Activated T-helper 1 cell treated with anti-CD3 and anti-CD28 coated beads, Interleukin-12 subunit alpha, Interleukin-12 subunit beta, Interleukin-2, Interleukin-4 antibody, amounts not matched to agents 30 ng/mL and 10 ng/mL and 1 ng/mL, durations not matched to agents 14 hours and 24 hours and 36 hours (primary cell): ENCODE measurements at regions of chr11 and their contacts with region 1.

Region 1: DNA sequence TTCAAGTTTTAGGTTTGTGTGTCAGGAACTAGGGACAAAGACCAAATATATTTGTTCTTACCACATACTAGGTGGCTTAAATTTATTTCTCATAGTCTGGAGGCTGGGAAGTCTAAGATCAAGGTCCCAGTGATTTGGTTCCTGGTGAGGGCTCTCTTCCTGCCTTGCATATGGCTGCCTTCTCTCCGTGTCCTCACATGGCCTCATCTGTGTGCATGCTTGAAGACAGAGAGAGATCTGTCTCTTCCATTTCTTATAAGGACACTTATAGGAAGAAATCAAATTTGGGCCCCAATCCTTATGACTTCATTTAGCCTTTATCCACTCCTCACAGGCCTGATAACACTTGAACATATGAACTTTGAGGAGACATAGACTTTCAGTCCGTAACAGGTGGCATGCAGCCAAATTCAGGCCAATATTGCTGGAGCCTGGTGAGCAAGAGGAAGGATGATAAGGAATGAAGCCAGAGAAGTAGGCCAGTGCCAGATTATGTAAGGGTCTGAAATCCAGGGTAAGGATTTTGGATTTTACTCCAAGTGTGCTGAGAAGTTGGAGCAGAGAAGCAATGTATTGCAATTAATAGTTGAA is 35.1 kb downstream of the TTC17 start:
- DNase-seq: no peak
- H3K4me3 Mint-ChIP-seq: no peak overlapping the region
- H3K27ac Mint-ChIP-seq: no peak overlapping the region
- H3K4me1 Mint-ChIP-seq: peaks cover 44% of the 10 kb centered on the region
- H3K27me3 Mint-ChIP-seq: peaks cover 1% of the 10 kb centered on the region

Region 2: GRCh38 chr11:43358801-43359421 is 34.9 kb before region 1 on chr11 and contains the start of gene TTC17:
- intact Hi-C with region 1: loop called (anchors 2 kb)
- DNase-seq: peak; percentile 92
- H3K4me3 Mint-ChIP-seq: peak within 1 kb of the TSS; percentile 94
- H3K27ac Mint-ChIP-seq: peak within 1 kb of the TSS; percentile 92
- H3K4me1 Mint-ChIP-seq: peaks cover 38% of the 10 kb centered on the region
- H3K27me3 Mint-ChIP-seq: peaks cover 2% of the 10 kb centered on the region
- total RNA-seq, gene TTC17: 74.4 and 74.7 TPM in 2 replicates